MCF 10A (cell line): ENCODE measurements at regions of chr12 and their contacts with region 1.

Region 1: GRCh38 chr12:7638760-7639555 is 26.8 kb downstream of the APOBEC1 start:
- DNase-seq: peak; percentile 82
- H3K4me3 Mint-ChIP-seq: no peak overlapping the region
- H3K27ac Mint-ChIP-seq: no peak overlapping the region
- H3K4me1 Mint-ChIP-seq: peaks cover 6% of the 10 kb centered on the region
- H3K27me3 Mint-ChIP-seq: no peaks in the 10 kb centered on the region
- CTCF ChIP-seq: peak; percentile 77

Region 2: DNA sequence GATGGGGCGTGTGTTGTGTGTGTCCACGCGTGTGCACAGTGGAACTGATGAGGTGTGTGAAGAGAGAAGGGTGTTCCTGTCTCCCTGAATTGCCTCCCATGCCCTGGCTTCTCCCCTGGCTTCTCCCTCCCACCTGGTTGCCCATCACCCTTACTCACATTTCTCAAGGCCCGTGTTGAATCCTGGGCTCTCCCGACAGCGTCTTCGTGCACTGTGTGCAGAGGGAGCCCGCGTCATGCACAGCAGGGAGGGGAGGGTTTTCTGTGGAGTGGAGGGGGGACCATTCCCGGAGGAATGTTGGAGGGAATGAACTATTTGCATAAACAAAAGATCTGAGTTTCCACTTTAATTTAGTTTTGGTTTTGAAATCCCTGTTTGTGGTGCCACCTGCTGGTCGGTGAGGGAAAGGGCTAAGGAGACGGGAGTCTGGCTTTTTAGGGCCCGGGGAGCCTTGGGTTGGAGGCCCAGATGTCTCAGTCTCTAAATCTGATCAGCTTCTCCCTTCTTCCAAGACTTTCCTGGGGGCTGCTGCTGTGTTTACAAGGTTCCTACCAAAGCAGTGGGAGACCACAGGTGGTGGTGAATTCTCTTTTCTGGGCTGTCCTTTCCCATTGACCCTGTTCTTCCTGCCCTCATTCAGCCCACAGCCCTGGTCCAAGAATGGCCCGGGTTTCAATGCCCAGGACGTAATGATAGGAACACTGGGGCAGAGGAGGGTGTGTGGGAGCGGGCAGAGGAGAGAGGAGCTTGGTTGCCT is 546.6 kb before region 1 on chr12 and contains the start of gene C1R:
- CTCF ChIA-PET with region 1: no interaction called
- POLR2A ChIA-PET with region 1: no interaction called
- intact Hi-C with region 1: no loop called
- DNase-seq: peak; percentile 88
- H3K4me3 Mint-ChIP-seq: peak within 1 kb of the TSS; percentile 79
- H3K27ac Mint-ChIP-seq: peak within 1 kb of the TSS; percentile 93
- H3K4me1 Mint-ChIP-seq: peaks cover 26% of the 10 kb centered on the region
- H3K27me3 Mint-ChIP-seq: no peaks in the 10 kb centered on the region
- CTCF ChIP-seq: peak; percentile 75
- total RNA-seq, gene C1R: 13.1 and 16.7 TPM in 2 replicates

Region 3: DNA sequence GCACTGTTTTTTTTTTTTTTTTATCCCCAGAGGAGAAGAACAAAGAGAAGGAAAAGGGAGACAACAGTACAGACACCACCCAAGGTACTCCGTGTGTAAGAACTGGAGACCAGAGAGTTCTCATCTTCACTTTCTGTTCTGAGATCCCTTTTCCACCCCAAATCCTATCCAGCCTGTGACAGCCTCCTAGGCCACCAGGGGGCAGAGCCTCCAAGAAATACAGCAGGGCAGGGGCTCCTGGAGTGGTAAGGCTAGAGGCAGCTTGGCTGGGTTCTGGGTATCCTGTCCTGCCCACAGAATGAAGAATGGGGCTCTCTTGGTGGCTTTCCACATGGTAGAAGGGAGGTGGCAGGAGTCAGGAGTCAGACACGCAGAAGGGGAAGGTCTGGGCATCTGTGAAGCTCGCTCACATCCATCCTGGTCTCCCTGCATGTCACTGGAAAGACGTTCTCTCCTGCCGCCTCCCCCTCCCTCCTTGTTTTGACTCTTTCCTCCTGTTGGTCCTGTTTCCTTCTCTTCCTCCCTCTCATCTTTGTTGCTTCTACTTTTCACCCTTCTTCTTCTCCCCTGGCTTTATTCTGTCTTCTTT is 496.8 kb before region 1 on chr12:
- CTCF ChIA-PET with region 1: interaction called, 7 read pairs
- POLR2A ChIA-PET with region 1: no interaction called
- intact Hi-C with region 1: loop called (anchors 1 kb)
- DNase-seq: peak; percentile 70
- H3K4me3 Mint-ChIP-seq: no peak overlapping the region
- H3K27ac Mint-ChIP-seq: no peak overlapping the region
- H3K4me1 Mint-ChIP-seq: no peaks in the 10 kb centered on the region
- H3K27me3 Mint-ChIP-seq: no peaks in the 10 kb centered on the region
- CTCF ChIP-seq: peak; percentile 45

Region 4: GRCh38 chr12:7460375-7461259 is 178.3 kb before region 1 on chr12:
- CTCF ChIA-PET with region 1: interaction called, 12 read pairs
- POLR2A ChIA-PET with region 1: no interaction called
- intact Hi-C with region 1: loop called (anchors 1 kb)
- DNase-seq: peak; percentile 69
- H3K4me3 Mint-ChIP-seq: no peak overlapping the region
- H3K27ac Mint-ChIP-seq: no peak overlapping the region
- H3K4me1 Mint-ChIP-seq: peaks cover 5% of the 10 kb centered on the region
- H3K27me3 Mint-ChIP-seq: peaks cover 5% of the 10 kb centered on the region
- CTCF ChIP-seq: peak; percentile 95

Region 5: GRCh38 chr12:7612851-7613250 is 26.1 kb before region 1 on chr12:
- CTCF ChIA-PET with region 1: interaction called, 20 read pairs
- POLR2A ChIA-PET with region 1: no interaction called
- intact Hi-C with region 1: no loop called
- DNase-seq: no peak
- H3K4me3 Mint-ChIP-seq: no peak overlapping the region
- H3K27ac Mint-ChIP-seq: no peak overlapping the region
- H3K4me1 Mint-ChIP-seq: peaks cover 9% of the 10 kb centered on the region
- H3K27me3 Mint-ChIP-seq: peaks cover 18% of the 10 kb centered on the region
- CTCF ChIP-seq: no peak

Region 6: GRCh38 chr12:7656121-7656520 is 17.2 kb after region 1 on chr12:
- CTCF ChIA-PET with region 1: interaction called, 12 read pairs
- POLR2A ChIA-PET with region 1: no interaction called
- intact Hi-C with region 1: no loop called
- DNase-seq: no peak
- H3K4me3 Mint-ChIP-seq: no peak overlapping the region
- H3K27ac Mint-ChIP-seq: no peak overlapping the region
- H3K4me1 Mint-ChIP-seq: no peaks in the 10 kb centered on the region
- H3K27me3 Mint-ChIP-seq: peaks cover 11% of the 10 kb centered on the region
- CTCF ChIP-seq: no peak